CD4-positive, alpha-beta T cell (primary cell): ENCODE measurements at regions of chr12 and their contacts with region 1.

Region 1: GRCh38 chr12:103930034-103930786 is at the start of gene HSP90B1:
- DNase-seq: peak; percentile 98 to 100 (median 99)
- ATAC-seq: peak; percentile 74
- H3K4me3 ChIP-seq: peak within 1 kb of the TSS; percentile 92
- H3K4me3 Mint-ChIP-seq: peak within 1 kb of the TSS; percentile 95
- H3K27ac ChIP-seq: peak within 1 kb of the TSS; percentile 95 to 98
- H3K27ac Mint-ChIP-seq: peak within 1 kb of the TSS; percentile 97
- H3K4me1 ChIP-seq: peaks cover 50% of the 10 kb centered on the region
- H3K4me1 Mint-ChIP-seq: peaks cover 76% of the 10 kb centered on the region
- H3K27me3 ChIP-seq: no peaks in the 10 kb centered on the region
- H3K27me3 Mint-ChIP-seq: peaks cover 4% of the 10 kb centered on the region
- CTCF ChIP-seq: no peak
- total RNA-seq, gene HSP90B1: 201 to 212 TPM

Region 2: GRCh38 chr12:103799870-103800771 is 130.1 kb before region 1 on chr12:
- CTCF ChIA-PET with region 1: no interaction called
- POLR2A ChIA-PET with region 1: no interaction called
- intact Hi-C with region 1: no loop called
- DNase-seq: peak in 1 of 14 experiments; percentile 9
- ATAC-seq: no peak
- H3K4me3 ChIP-seq: no peak overlapping the region
- H3K4me3 Mint-ChIP-seq: no peak overlapping the region
- H3K27ac ChIP-seq: no peak overlapping the region
- H3K27ac Mint-ChIP-seq: no peak overlapping the region
- H3K4me1 ChIP-seq: no peaks in the 10 kb centered on the region
- H3K4me1 Mint-ChIP-seq: no peaks in the 10 kb centered on the region
- H3K27me3 ChIP-seq: no peaks in the 10 kb centered on the region
- H3K27me3 Mint-ChIP-seq: no peaks in the 10 kb centered on the region
- CTCF ChIP-seq: no peak

Region 3: DNA sequence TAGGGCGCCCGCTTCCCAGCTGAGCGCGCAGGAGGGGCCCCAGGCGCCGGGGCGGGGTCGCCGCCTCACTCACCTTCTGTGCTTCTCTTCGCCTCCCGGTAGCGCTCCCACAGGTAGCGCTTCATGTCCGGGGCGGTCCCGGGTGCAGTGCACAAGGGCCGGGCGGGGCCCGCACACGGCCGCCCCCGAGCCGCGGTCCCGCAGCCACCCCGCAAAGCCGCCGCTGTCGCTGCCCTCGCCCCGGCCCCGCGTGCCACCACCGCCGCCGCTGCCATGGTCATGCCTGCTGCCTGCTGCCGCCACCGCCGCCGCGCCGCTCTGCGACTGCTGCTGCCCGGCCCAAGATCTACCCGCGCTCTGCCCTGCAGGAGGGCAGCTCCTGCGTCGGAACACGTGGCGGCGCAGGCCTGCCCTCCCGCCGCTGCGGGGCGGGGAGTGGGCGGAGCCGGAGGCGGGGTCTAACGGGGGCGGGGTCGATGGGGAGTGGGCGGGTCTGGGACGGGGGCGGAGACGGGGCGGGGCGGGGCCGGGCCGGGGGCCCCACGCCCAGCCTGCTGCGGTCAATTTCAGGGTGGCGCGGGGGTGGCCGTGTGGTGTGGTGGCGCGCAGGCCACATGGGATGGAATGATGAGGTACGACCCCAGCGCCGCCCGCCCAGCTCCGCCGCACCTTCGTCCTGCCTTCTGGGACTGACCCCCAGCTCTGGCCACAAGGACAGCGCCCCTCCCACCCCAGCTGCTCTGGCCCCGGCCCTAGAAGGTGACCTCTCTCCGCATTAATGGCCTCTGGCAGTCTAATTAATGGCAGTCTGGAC is 89.1 kb before region 1 on chr12 and contains the start of gene NT5DC3:
- CTCF ChIA-PET with region 1: no interaction called
- POLR2A ChIA-PET with region 1: interaction called, 26 read pairs
- intact Hi-C with region 1: loop called in 1 of 2 experiments (anchors 2 kb)
- DNase-seq: peak; percentile 72 to 92 (median 82)
- ATAC-seq: peak; percentile 87
- H3K4me3 ChIP-seq: peak within 1 kb of the TSS; percentile 78
- H3K4me3 Mint-ChIP-seq: peak within 1 kb of the TSS; percentile 94
- H3K27ac ChIP-seq: peak within 1 kb of the TSS in 1 of 2 donors; percentile 60
- H3K27ac Mint-ChIP-seq: peak within 1 kb of the TSS; percentile 78
- H3K4me1 ChIP-seq: peaks cover 19% of the 10 kb centered on the region
- H3K4me1 Mint-ChIP-seq: peaks cover 21% of the 10 kb centered on the region
- H3K27me3 ChIP-seq: no peaks in the 10 kb centered on the region
- H3K27me3 Mint-ChIP-seq: no peaks in the 10 kb centered on the region
- CTCF ChIP-seq: no peak
- total RNA-seq, gene NT5DC3: 3.5 to 4.0 TPM

Region 4: DNA sequence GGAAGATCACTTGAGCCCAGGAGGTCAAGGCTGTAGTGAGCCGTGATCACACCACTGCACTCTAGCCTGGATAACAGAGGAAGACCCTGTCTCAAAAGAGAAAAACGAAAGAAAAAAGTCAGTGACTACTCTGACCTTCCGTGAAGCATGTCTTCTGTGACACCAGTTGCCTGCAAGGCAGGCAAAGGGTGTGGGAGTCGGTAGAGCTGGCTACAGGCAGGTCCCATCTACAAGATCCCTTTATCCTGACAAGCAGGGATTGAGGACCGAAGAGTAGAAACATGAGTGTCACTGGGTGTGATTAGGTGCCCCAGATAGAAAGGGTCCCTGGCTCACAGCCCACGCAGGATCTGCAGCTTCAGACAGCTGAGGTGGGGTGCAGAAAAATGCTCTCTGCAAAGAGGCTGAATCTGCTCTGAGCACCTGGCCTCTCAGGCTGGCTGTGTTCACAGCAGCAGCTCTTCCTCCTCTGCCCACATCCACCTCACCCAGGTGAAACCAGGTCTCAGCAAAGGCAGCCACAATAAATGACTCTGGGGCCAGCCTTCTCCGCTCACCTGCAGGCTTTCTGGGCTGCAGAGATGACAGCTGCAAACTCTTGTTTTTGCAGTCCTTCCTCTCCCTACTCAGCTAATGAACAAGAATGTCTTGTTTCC is 28.6 kb before region 1 on chr12:
- CTCF ChIA-PET with region 1: interaction called, 3 read pairs
- POLR2A ChIA-PET with region 1: interaction called, 208 read pairs
- intact Hi-C with region 1: loop called (anchors 1 to 2 kb)
- DNase-seq: peak; percentile 40 to 79 (median 57)
- ATAC-seq: peak; percentile 96
- H3K4me3 ChIP-seq: peak overlapping the region; percentile 43
- H3K4me3 Mint-ChIP-seq: peak overlapping the region; percentile 70
- H3K27ac ChIP-seq: peak overlapping the region; percentile 51 to 68
- H3K27ac Mint-ChIP-seq: peak overlapping the region; percentile 95
- H3K4me1 ChIP-seq: peaks cover 55% of the 10 kb centered on the region
- H3K4me1 Mint-ChIP-seq: peaks cover 76% of the 10 kb centered on the region
- H3K27me3 ChIP-seq: no peaks in the 10 kb centered on the region
- H3K27me3 Mint-ChIP-seq: no peaks in the 10 kb centered on the region
- CTCF ChIP-seq: no peak

Region 5: DNA sequence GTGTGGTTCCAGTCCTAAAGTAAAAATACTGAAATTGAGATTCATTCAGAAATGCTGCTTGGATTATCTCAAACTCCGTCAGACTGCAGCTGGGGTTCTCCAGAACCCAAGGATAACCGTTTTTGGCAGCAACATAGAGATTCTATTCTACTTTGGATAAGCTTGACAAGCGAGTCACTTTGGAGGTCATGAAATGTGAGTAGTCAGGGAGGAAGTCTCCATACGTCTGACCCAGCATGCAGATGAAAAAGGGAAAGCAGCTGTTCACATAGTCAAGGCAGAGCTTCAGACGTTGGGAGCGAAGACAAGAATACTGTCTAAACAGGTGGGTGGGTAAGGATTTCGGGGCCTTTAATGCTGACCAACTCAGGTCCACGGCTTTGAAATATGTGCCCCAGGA is 14.9 kb before region 1 on chr12:
- CTCF ChIA-PET with region 1: no interaction called
- POLR2A ChIA-PET with region 1: interaction called, 16 read pairs
- intact Hi-C with region 1: no loop called
- DNase-seq: no peak
- ATAC-seq: no peak
- H3K4me3 ChIP-seq: no peak overlapping the region
- H3K4me3 Mint-ChIP-seq: no peak overlapping the region
- H3K27ac ChIP-seq: no peak overlapping the region
- H3K27ac Mint-ChIP-seq: no peak overlapping the region
- H3K4me1 ChIP-seq: no peaks in the 10 kb centered on the region
- H3K4me1 Mint-ChIP-seq: no peaks in the 10 kb centered on the region
- H3K27me3 ChIP-seq: no peaks in the 10 kb centered on the region
- H3K27me3 Mint-ChIP-seq: no peaks in the 10 kb centered on the region
- CTCF ChIP-seq: no peak

Region 6: DNA sequence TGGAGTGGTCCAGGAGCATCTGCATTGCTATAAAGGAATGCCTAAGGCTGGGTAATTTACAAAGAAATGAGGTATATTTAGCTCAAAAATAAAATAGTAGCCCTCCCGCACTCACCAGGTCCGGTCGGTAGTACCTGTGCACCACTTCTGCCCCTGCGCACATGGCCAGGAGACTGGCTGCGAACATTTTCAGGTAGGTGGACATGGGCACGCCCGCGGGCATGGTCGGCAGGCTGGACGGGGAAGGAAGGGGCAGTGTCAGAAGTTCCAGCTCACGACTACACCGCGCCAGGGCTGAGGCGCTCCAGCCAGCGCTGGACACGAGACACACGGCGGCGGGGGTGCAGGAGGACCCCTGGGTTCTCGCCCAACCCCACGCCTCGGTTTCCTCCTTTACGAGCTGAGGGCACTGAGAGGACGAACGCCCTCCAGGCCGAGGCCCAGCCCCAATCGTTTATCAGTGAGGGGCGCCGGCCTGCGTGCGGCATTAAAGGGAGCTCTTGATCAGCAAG is 26.4 kb after region 1 on chr12:
- CTCF ChIA-PET with region 1: no interaction called
- POLR2A ChIA-PET with region 1: interaction called, 213 read pairs
- intact Hi-C with region 1: loop called (anchors 1 to 2 kb)
- DNase-seq: peak in 2 of 14 experiments; percentile 10 to 34
- ATAC-seq: no peak
- H3K4me3 ChIP-seq: peak overlapping the region; percentile 95
- H3K4me3 Mint-ChIP-seq: peak overlapping the region; percentile 99
- H3K27ac ChIP-seq: peak overlapping the region; percentile 64 to 74
- H3K27ac Mint-ChIP-seq: peak overlapping the region; percentile 97
- H3K4me1 ChIP-seq: peaks cover 25% of the 10 kb centered on the region
- H3K4me1 Mint-ChIP-seq: peaks cover 42% of the 10 kb centered on the region
- H3K27me3 ChIP-seq: no peaks in the 10 kb centered on the region
- H3K27me3 Mint-ChIP-seq: no peaks in the 10 kb centered on the region
- CTCF ChIP-seq: no peak

Region 7: DNA sequence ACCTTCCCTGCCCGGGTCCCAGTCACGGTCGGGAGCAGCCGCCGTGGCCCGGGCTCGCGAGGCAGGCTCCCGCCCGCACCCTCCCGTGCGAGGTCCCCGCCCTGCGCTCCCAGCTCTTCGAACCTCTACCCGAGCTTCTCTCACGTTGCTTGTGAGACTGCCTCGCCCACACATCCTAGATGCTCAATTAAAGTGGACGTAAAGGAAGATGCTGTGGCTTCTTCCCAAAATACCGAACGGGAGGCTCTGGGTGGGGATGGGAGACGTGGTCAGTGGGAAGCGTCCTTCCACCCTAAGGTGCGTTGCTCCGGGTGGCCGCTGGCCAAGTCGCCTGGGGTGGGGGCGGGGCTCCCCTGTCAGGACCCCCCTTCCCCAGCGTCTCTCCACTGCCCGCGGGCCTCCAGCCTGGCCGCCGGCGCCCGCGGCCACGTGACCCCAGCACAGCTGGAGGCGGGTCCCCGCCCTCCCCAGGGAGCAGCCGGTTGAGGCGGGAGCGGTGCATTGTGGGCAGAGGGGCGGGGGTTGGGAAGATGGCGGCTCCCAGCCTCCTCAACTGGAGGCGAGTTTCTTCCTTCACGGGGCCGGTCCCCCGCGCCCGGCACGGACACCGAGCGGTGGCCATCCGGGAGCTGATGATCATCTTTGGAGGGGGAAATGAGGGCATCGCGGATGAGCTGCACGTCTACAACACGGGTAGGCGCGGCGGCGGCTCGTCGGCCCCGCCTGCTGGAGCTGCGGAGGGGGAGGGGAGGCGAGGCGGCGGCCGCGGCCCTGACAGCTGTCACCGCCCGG is 134.0 kb after region 1 on chr12 and contains the start of gene HCFC2:
- CTCF ChIA-PET with region 1: no interaction called
- POLR2A ChIA-PET with region 1: interaction called, 33 read pairs
- intact Hi-C with region 1: loop called (anchors 1 to 2 kb)
- DNase-seq: peak; percentile 74 to 93 (median 85)
- ATAC-seq: peak; percentile 92
- H3K4me3 ChIP-seq: peak within 1 kb of the TSS; percentile 85
- H3K4me3 Mint-ChIP-seq: peak within 1 kb of the TSS; percentile 95
- H3K27ac ChIP-seq: peak within 1 kb of the TSS; percentile 42 to 59
- H3K27ac Mint-ChIP-seq: peak within 1 kb of the TSS; percentile 82
- H3K4me1 ChIP-seq: peaks cover 17% of the 10 kb centered on the region
- H3K4me1 Mint-ChIP-seq: peaks cover 33% of the 10 kb centered on the region
- H3K27me3 ChIP-seq: peaks cover 0 to 2% of the 10 kb centered on the region in 2 experiments
- H3K27me3 Mint-ChIP-seq: peaks cover 10% of the 10 kb centered on the region
- CTCF ChIP-seq: no peak
- total RNA-seq, gene HCFC2: 11.2 to 15.1 TPM

Region 8: GRCh38 chr12:104137913-104138796 is 207.9 kb after region 1 on chr12 and contains the start of gene NFYB:
- CTCF ChIA-PET with region 1: no interaction called
- POLR2A ChIA-PET with region 1: interaction called, 52 read pairs
- intact Hi-C with region 1: loop called in 1 of 2 experiments (anchors 5 kb)
- DNase-seq: peak; percentile 85 to 98 (median 90)
- ATAC-seq: peak; percentile 96
- H3K4me3 ChIP-seq: peak within 1 kb of the TSS; percentile 63
- H3K4me3 Mint-ChIP-seq: peak within 1 kb of the TSS; percentile 93
- H3K27ac ChIP-seq: peak within 1 kb of the TSS in 1 of 2 donors; percentile 43
- H3K27ac Mint-ChIP-seq: peak within 1 kb of the TSS; percentile 80
- H3K4me1 ChIP-seq: peaks cover 18% of the 10 kb centered on the region
- H3K4me1 Mint-ChIP-seq: no peaks in the 10 kb centered on the region
- H3K27me3 ChIP-seq: no peaks in the 10 kb centered on the region
- H3K27me3 Mint-ChIP-seq: no peaks in the 10 kb centered on the region
- CTCF ChIP-seq: no peak
- total RNA-seq, gene NFYB: 12.8 to 14.6 TPM

Region 9: GRCh38 chr12:104230304-104231095 is 300.3 kb after region 1 on chr12:
- CTCF ChIA-PET with region 1: no interaction called
- POLR2A ChIA-PET with region 1: no interaction called
- intact Hi-C with region 1: no loop called
- DNase-seq: no peak
- ATAC-seq: no peak
- H3K4me3 ChIP-seq: no peak overlapping the region
- H3K4me3 Mint-ChIP-seq: no peak overlapping the region
- H3K27ac ChIP-seq: no peak overlapping the region
- H3K27ac Mint-ChIP-seq: no peak overlapping the region
- H3K4me1 ChIP-seq: no peaks in the 10 kb centered on the region
- H3K4me1 Mint-ChIP-seq: no peaks in the 10 kb centered on the region
- H3K27me3 ChIP-seq: no peaks in the 10 kb centered on the region
- H3K27me3 Mint-ChIP-seq: peaks cover 4% of the 10 kb centered on the region
- CTCF ChIP-seq: no peak

Region 10: GRCh38 chr12:104793285-104793684 is 863.1 kb after region 1 on chr12:
- CTCF ChIA-PET with region 1: no interaction called
- POLR2A ChIA-PET with region 1: no interaction called
- intact Hi-C with region 1: no loop called
- DNase-seq: no peak
- ATAC-seq: no peak
- H3K4me3 ChIP-seq: no peak overlapping the region
- H3K4me3 Mint-ChIP-seq: no peak overlapping the region
- H3K27ac ChIP-seq: no peak overlapping the region
- H3K27ac Mint-ChIP-seq: no peak overlapping the region
- H3K4me1 ChIP-seq: peaks cover 6% of the 10 kb centered on the region
- H3K4me1 Mint-ChIP-seq: peaks cover 4% of the 10 kb centered on the region
- H3K27me3 ChIP-seq: no peaks in the 10 kb centered on the region
- H3K27me3 Mint-ChIP-seq: no peaks in the 10 kb centered on the region
- CTCF ChIP-seq: no peak